IMR-90 (cell line): ENCODE measurements at regions of chr3 and their contacts with region 1.

Region 1: DNA sequence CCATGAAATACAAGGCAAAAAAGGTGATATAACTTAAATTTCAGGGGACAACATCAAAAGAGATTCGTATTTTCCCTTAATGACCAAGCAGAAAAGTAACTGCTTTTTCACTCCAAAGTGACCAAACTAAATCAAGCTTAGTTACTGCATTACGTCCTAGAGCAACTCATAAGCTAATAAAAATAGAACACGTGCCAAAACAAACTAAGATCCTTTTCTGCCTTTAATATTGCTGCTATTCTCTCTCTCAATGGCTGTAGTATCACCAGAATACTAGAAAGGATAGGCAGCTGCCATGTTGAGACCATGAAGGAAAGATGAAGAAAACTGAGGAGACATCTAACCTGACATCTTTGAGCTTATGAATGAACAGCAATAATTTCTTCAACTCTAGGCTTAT is 43.3 kb downstream of the UBXN7 start:
- DNase-seq: no peak
- ATAC-seq: no peak
- H3K4me3 ChIP-seq: no peak overlapping the region
- H3K27ac ChIP-seq: no peak overlapping the region
- H3K4me1 ChIP-seq: no peaks in the 10 kb centered on the region
- H3K27me3 ChIP-seq: no peaks in the 10 kb centered on the region
- CTCF ChIP-seq: no peak
- POLR2A ChIP-seq: no peak
- RAD21 ChIP-seq: no peak

Region 2: GRCh38 chr3:196136026-196136984 is 252.7 kb before region 1 on chr3:
- CTCF ChIA-PET with region 1: no interaction called
- POLR2A ChIA-PET with region 1: no interaction called
- dilution Hi-C with region 1: no loop called
- in situ Hi-C with region 1: no loop called
- intact Hi-C with region 1: no loop called
- DNase-seq: no peak
- ATAC-seq: peak; percentile 36
- H3K4me3 ChIP-seq: no peak overlapping the region
- H3K27ac ChIP-seq: no peak overlapping the region
- H3K4me1 ChIP-seq: peaks cover 10% of the 10 kb centered on the region
- H3K27me3 ChIP-seq: peaks cover 7% of the 10 kb centered on the region; the same call in 1 of the 2 replicates
- CTCF ChIP-seq: no peak
- POLR2A ChIP-seq: no peak
- RAD21 ChIP-seq: no peak

Region 3: GRCh38 chr3:196378146-196378841 is 10.7 kb before region 1 on chr3:
- CTCF ChIA-PET with region 1: no interaction called
- POLR2A ChIA-PET with region 1: no interaction called
- dilution Hi-C with region 1: no loop called
- in situ Hi-C with region 1: no loop called
- intact Hi-C with region 1: loop called (anchors 2 kb)
- DNase-seq: no peak
- ATAC-seq: no peak
- H3K4me3 ChIP-seq: no peak overlapping the region
- H3K27ac ChIP-seq: no peak overlapping the region
- H3K4me1 ChIP-seq: no peaks in the 10 kb centered on the region; the same call in 1 of the 2 replicates
- H3K27me3 ChIP-seq: no peaks in the 10 kb centered on the region
- CTCF ChIP-seq: no peak
- POLR2A ChIP-seq: no peak
- RAD21 ChIP-seq: no peak